ENCODE measurements at regions of chr6 and their contacts with region 1.

Region 1: DNA sequence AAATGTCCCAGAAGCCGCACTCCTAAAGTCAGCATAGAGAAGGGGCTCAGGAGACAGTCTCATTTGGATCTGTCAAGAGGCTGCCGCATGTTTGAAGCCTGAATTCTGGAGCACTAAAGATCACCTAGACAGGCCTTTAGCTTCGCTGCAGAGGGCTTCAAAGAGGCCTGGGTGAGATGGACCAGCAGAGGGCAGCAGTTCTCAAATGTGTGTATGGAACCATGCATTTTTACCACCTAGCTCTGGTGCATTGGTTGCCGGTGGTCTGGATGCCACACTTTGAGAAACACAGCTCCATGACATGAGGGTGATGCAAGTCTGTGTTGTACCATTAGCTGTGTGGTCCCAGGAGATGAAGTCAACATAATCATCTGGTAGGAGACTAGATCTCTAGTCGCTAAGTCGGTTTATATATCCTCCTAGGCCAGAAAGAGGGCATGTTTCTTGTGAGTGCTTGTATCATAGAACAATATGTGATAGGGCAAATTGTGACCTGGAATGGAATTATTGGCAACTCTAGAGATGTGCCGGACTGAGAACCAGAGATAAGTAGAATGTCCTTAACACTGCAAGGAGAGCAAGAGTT is 64.8 kb downstream of the KIAA0319 start:
- DNase-seq: peak; percentile 42
- H3K27ac ChIP-seq: no peak overlapping the region
- CTCF ChIP-seq: peak; percentile 81

Region 2: GRCh38 chr6:24549674-24550353 is 31.4 kb before region 1 on chr6:
- CTCF ChIA-PET with region 1: interaction called, 11 read pairs
- POLR2A ChIA-PET with region 1: no interaction called
- DNase-seq: no peak
- H3K27ac ChIP-seq: no peak overlapping the region
- CTCF ChIP-seq: no peak

Region 3: GRCh38 chr6:24694198-24694597 is 113.0 kb after region 1 on chr6:
- CTCF ChIA-PET with region 1: interaction called, 18 read pairs
- POLR2A ChIA-PET with region 1: no interaction called
- DNase-seq: no peak
- H3K27ac ChIP-seq: no peak overlapping the region
- CTCF ChIP-seq: no peak

Region 4: DNA sequence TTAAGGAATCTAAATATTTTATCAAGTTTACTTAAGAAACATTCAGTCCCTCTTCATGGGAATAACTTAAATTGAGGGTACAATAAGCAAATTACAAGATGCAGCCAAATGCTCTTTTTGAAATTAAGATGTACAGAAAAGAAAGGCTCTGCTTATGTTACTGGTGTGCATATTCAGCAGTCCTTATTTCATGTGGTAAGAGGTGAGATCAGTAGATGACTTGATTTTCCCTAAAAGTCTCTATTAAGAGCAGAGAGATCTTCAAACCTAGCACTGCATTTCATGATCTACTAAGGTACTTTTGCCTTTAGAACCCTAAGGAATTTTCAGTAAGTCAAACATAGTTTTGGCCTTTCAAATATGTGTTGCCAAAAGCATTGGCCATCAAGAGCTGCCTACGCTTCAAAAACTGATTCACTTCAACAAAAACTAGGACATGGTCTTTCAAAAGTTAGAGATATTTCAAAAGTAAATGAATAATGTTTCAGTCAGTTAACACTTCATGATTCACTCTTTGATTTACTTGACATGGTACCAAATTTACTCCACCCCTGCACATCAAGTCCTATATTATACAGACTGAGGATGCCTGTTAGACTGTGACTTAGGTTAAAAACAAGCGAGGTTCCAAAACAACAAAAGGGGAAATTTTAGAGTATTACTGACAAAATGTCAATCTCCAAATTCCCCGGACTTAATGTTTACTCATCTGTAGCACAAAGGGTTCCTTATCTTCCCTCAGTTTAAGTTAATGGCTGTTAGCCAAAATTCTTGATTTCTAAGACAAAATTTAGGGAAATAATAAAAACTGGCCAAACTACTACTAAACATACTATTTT is 118.6 kb after region 1 on chr6:
- CTCF ChIA-PET with region 1: interaction called, 18 read pairs
- POLR2A ChIA-PET with region 1: no interaction called
- DNase-seq: no peak
- H3K27ac ChIP-seq: no peak overlapping the region
- CTCF ChIP-seq: no peak

Region 5: GRCh38 chr6:24743944-24744335 is 162.8 kb after region 1 on chr6:
- CTCF ChIA-PET with region 1: no interaction called
- POLR2A ChIA-PET with region 1: no interaction called
- DNase-seq: no peak
- H3K27ac ChIP-seq: no peak overlapping the region
- CTCF ChIP-seq: no peak

Measured in RWPE1 (cell line).